CD4-positive, alpha-beta memory T cell (primary cell): ENCODE measurements at regions of chr2 and their contacts with region 1.

Region 1: DNA sequence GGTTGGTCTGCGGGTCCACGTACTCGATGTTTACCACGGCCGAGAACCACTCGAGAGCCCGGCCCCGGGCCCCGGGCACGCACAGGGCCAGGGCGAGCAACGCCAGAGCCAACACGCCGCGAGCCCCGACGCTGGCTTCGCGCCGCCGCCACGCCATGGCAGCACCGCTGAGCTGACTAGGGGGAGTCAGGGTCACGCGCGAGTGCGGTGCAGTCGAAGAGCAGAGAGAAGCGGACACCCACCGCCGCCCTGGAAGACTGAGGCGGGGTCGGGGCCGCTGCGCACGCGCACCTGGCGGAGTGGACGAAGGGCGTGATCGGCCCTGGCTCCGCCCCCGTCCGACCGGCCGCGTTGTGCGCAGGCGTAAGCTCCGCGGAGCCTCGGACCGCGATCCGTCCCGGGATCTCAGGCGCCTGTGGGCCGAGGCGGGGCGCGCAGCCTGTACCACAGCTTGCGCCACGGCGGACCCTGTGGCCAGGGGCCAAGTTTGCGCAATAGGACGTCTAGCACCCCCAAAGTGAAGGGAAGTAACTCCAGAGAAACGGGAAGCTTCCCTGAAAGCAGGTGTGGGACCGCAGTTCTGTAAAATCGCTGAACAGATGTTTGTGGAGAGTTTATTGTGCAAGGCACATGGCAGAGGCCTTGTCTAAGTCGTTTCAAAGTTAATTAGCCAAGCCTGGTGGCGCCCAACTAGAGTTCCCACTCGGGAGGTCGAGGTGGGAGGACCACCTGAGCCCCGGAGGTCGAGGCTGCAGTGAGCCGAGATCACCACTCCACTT is at the start of gene RNF149:
- DNase-seq: peak; percentile 89 to 92 (median 90)
- H3K4me3 ChIP-seq: peak within 1 kb of the TSS; percentile 68 to 92
- H3K4me3 Mint-ChIP-seq: peak within 1 kb of the TSS; percentile 93 to 100 (median 100)
- H3K27ac ChIP-seq: peak within 1 kb of the TSS; percentile 86
- H3K27ac Mint-ChIP-seq: peak within 1 kb of the TSS; percentile 96 to 100 (median 99)
- H3K4me1 ChIP-seq: peaks cover 72% of the 10 kb centered on the region
- H3K4me1 Mint-ChIP-seq: peaks cover 53 to 95% (median 67%) of the 10 kb centered on the region in 4 donors
- H3K27me3 ChIP-seq: no peaks in the 10 kb centered on the region
- H3K27me3 Mint-ChIP-seq: no peaks in the 10 kb centered on the region
- total RNA-seq, gene RNF149: 138 to 154 TPM

Region 2: GRCh38 chr2:101272045-101272784 is 36.4 kb before region 1 on chr2:
- CTCF ChIA-PET with region 1: no interaction called
- POLR2A ChIA-PET with region 1: interaction called, 4 read pairs
- intact Hi-C with region 1: loop called (anchors 5 kb)
- DNase-seq: peak in 1 of 5 donors; percentile 16
- H3K4me3 ChIP-seq: no peak overlapping the region
- H3K4me3 Mint-ChIP-seq: no peak overlapping the region
- H3K27ac ChIP-seq: no peak overlapping the region
- H3K27ac Mint-ChIP-seq: peak overlapping the region; percentile 3 to 85 (median 57)
- H3K4me1 ChIP-seq: peaks cover 23% of the 10 kb centered on the region
- H3K4me1 Mint-ChIP-seq: peaks cover 21 to 34% (median 27%) of the 10 kb centered on the region in 4 donors
- H3K27me3 ChIP-seq: no peaks in the 10 kb centered on the region
- H3K27me3 Mint-ChIP-seq: no peaks in the 10 kb centered on the region

Region 3: DNA sequence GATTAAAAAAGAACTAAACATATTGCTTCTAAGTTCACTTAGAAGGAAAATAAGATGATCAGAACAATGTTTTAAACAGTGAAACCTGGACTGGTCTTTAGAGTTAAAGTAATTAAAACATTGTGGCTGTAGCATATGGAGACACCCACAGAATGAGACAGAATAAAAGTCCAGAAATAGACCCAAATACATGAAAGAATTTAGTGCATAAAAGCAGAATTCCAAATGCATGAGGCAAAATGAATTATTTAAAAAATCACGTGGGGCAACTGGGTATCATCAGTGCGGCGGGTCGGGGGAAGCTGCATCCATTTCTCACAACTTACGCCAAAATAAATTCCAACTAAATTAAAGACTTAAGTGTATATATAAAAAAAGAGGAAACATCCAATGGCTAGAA is 12.2 kb before region 1 on chr2:
- CTCF ChIA-PET with region 1: interaction called, 3 read pairs
- POLR2A ChIA-PET with region 1: interaction called, 22 read pairs
- intact Hi-C with region 1: loop called (anchors 2 kb)
- DNase-seq: no peak
- H3K4me3 ChIP-seq: no peak overlapping the region
- H3K4me3 Mint-ChIP-seq: peak overlapping the region in 7 of 8 donors; percentile 26 to 81 (median 37)
- H3K27ac ChIP-seq: no peak overlapping the region
- H3K27ac Mint-ChIP-seq: peak overlapping the region in 5 of 7 donors; percentile 29 to 96 (median 77)
- H3K4me1 ChIP-seq: peaks cover 73% of the 10 kb centered on the region
- H3K4me1 Mint-ChIP-seq: peaks cover 50 to 92% (median 60%) of the 10 kb centered on the region in 4 donors
- H3K27me3 ChIP-seq: no peaks in the 10 kb centered on the region
- H3K27me3 Mint-ChIP-seq: no peaks in the 10 kb centered on the region

Region 4: GRCh38 chr2:101341901-101342624 is 33.4 kb after region 1 on chr2:
- CTCF ChIA-PET with region 1: interaction called, 25 read pairs
- POLR2A ChIA-PET with region 1: interaction called, 18 read pairs
- intact Hi-C with region 1: loop called (anchors 1 kb)
- DNase-seq: peak; percentile 59 to 66 (median 62)
- H3K4me3 ChIP-seq: no peak overlapping the region
- H3K4me3 Mint-ChIP-seq: peak overlapping the region in 4 of 8 donors; percentile 21 to 58 (median 34)
- H3K27ac ChIP-seq: no peak overlapping the region
- H3K27ac Mint-ChIP-seq: peak overlapping the region in 5 of 7 donors; percentile 25 to 75 (median 65)
- H3K4me1 ChIP-seq: peaks cover 26% of the 10 kb centered on the region
- H3K4me1 Mint-ChIP-seq: peaks cover 21 to 33% (median 29%) of the 10 kb centered on the region in 4 donors
- H3K27me3 ChIP-seq: no peaks in the 10 kb centered on the region
- H3K27me3 Mint-ChIP-seq: no peaks in the 10 kb centered on the region